Activated naive CD4-positive, alpha-beta T cell treated with anti-CD3 and anti-CD28 coated beads for 36 hours (primary cell): ENCODE measurements at regions of chr9 and their contacts with region 1.

Region 1: DNA sequence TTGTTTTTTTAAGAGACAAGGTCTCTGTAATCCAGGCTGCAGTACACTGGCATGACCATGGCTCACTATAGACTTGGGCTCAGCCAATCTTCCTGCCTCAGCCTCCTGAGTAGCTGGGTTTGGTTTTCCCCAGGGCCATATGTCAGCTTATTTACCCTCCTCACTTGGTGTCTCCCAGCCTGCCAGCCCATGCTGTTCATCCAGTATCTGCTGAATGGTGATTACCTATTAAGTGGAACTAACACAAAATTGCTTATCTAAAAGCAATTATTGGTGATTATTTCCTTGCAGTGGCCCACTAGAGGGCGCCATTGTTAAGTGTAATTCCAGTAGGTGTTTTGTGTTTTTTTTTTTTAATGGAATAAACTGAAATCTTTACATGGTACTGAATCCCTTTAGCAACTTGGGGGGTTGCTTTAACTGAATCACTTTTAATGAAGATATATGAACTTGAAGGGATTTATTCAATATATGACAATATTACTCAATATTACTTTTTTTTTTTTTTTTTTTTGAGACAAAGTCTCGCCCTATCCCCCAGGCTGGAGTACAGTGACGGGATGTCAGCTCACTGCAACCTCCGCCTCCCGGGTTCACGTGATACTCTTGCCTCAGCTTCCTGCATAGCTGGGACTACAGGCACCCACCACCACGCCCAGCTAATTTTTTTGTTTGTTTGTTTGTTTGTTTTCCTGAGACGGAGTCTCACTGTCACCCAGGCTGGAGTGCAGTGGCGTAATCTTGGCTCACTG is 13.8 kb downstream of the EXOSC2 start:
- DNase-seq: peak; percentile 82
- H3K4me3 Mint-ChIP-seq: no peak overlapping the region
- H3K27ac Mint-ChIP-seq: peak overlapping the region; percentile 65
- H3K4me1 Mint-ChIP-seq: peaks cover 5% of the 10 kb centered on the region
- H3K27me3 Mint-ChIP-seq: no peaks in the 10 kb centered on the region

Region 2: GRCh38 chr9:130693426-130694191 is 13.8 kb before region 1 on chr9 and contains the start of gene EXOSC2:
- CTCF ChIA-PET with region 1: interaction called, 13 read pairs
- intact Hi-C with region 1: loop called (anchors 1 kb)
- DNase-seq: peak; percentile 99
- H3K4me3 Mint-ChIP-seq: peak within 1 kb of the TSS; percentile 90
- H3K27ac Mint-ChIP-seq: peak within 1 kb of the TSS; percentile 87
- H3K4me1 Mint-ChIP-seq: peaks cover 38% of the 10 kb centered on the region
- H3K27me3 Mint-ChIP-seq: no peaks in the 10 kb centered on the region
- total RNA-seq, gene EXOSC2: 70.1 to 72.6 TPM

Region 3: DNA sequence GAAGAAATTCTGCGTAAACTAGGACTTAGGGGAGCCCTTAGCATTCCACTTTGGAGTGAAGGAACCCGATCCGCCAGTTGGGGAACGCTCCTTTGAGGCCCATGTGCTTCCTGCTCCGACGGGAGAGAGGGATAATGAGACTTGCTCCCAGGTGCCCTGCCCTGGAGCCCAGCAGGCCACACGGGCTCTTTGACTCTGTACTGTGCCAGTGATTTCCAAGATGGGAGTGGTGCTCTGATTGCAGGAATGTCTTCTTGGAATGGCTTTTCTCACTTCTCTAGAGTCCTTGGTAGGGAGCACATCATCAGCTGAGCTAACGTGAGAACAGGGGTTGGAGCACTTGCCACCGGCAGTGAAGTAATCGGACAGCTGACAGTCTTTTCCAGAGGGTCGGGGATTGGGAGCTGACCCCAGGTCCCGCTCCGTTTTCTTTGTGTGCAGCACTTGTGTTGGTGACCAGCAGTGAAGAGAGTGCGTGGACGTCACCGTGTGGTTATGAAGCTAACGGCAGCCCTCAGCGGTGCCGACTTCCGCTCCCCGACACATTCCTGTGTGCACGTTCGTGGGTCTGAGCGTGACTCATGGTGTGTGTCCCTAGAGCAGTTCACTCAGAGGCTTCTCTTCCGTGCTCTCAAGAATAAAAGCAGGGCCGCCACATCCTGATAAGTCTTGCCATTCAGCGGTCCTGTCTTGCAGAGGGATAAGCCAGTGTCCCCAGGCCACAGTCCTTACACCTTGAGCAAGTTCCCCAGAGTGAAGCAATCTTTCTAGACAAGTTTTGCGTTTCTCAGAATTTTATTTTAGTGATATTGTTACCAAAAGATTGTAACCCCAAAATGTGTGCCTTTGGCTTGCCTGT is 153.3 kb after region 1 on chr9:
- CTCF ChIA-PET with region 1: interaction called, 11 read pairs
- intact Hi-C with region 1: loop called (anchors 1 kb)
- DNase-seq: no peak
- H3K4me3 Mint-ChIP-seq: no peak overlapping the region
- H3K27ac Mint-ChIP-seq: no peak overlapping the region
- H3K4me1 Mint-ChIP-seq: no peaks in the 10 kb centered on the region
- H3K27me3 Mint-ChIP-seq: no peaks in the 10 kb centered on the region

Region 4: DNA sequence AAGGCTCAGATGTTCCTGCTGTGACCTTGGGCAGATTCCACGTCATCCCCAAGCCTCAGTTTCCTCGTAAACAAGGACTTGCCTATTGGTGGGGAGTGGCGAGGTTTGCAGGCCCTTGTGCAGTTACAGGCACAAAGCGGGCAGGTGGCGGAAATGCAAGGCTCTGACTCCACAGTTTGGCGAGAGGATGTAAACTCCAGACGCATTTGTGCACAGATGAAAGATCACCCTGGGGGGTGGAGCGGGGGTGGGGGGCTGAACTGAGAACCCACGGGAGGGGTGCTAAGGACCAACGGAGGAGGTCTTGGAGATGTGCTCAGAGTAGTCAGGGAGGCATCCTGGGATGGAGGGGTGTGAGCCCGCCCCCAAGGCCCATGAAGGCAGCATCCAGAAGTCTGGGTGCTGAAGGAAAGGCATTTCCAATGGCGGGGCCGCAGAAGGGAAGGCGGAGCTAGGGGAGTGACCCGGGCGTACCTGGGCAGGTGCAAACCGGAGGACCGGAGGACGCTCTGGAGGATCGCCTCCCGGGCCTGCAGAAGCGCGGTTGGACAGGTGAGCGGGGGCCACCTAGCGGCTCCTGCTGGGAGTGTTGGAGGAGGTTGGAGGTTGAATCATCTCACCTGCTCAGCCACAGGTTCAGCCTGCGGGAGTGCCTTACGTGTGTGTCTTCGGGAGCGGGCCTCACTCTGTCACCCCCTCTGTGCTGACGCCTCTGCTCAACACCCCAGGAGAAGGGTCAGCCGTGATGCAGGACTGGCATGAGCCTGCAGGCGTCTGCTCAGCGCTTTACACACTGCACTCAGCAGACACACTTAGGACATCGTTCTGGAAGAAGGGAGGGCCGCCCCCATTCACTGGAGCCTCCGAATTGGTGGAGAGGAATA is 233.5 kb after region 1 on chr9:
- CTCF ChIA-PET with region 1: no interaction called
- intact Hi-C with region 1: loop called (anchors 1 kb)
- DNase-seq: peak; percentile 87
- H3K4me3 Mint-ChIP-seq: no peak overlapping the region
- H3K27ac Mint-ChIP-seq: no peak overlapping the region
- H3K4me1 Mint-ChIP-seq: peaks cover 10% of the 10 kb centered on the region
- H3K27me3 Mint-ChIP-seq: peaks cover 52% of the 10 kb centered on the region